ENCODE measurements at regions of chr4 and their contacts with region 1.

Region 1: DNA sequence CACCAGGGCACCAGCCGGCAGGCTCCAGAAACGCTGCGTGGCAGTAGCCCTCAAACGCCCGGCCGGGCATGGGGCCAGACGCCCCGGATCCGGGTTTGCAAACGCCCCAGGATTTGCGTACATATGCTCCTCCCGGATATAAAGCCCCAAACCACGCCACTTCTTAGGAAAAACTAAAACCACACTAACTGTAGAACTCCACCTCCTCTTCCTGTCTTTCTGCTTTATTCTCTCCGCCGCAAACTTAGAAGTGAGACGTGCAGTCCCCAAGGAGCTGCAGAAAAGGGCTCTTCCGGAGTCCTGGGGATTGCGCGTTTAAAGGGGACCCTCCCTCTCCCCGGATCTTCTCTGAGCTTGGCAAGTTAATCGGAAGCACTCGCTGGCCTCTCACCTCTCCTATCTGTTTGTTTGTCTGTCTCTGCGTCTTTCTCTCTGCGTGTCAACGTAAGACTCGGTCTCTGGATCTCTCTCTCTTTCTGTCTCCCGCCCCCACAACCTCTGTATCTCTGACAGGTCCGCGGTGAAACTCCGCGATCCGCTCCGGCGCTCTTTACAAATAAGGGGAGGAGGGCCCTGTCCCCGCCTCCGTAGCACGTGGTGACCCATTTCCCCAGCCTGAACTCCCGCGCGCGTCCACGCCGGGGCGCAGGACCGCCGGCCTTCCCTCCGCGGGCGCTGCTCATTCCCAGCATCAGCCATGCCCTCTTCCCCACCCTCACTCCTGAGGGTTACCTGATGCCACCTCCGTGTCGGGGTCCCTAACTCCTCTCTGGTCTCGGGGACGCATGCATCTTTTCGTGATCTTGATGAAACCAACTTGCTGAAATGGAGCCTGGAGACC is at the start of gene SLC39A8:
- DNase-seq: peak; percentile 93
- ATAC-seq: peak; percentile 88
- H3K4me3 ChIP-seq: peak within 1 kb of the TSS; percentile 75 to 91 (median 84)
- H3K4me3 Mint-ChIP-seq: peak within 1 kb of the TSS; percentile 87
- H3K27ac ChIP-seq: peak within 1 kb of the TSS; percentile 88 to 90
- H3K27ac Mint-ChIP-seq: peak within 1 kb of the TSS; percentile 90
- H3K4me1 ChIP-seq: peaks cover 21 to 23% of the 10 kb centered on the region in 2 donors
- H3K4me1 Mint-ChIP-seq: peaks cover 24% of the 10 kb centered on the region
- H3K27me3 ChIP-seq: no peaks in the 10 kb centered on the region
- H3K27me3 Mint-ChIP-seq: no peaks in the 10 kb centered on the region
- CTCF ChIP-seq: peak; percentile 91
- total RNA-seq, gene SLC39A8: 8.4 and 10.2 TPM in 2 replicates

Region 2: DNA sequence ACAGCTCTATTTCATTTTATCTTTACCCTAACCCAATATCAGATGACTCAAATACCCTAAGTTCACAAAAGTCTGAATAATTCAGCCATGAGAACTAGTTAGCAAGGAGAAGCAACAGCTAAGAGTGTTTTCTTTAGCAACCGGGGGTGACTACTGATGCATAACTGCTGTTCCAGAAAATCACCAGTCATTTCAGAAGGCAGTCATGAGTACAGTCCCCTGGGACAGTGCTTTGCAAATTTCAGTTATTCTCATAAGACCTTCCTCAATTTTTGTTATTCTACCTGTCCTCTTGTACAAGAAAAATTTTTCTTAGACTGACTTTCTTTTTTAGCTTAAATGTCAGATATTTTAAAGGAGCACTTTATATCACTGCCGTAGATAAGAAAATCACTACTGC is 538.3 kb before region 1 on chr4:
- CTCF ChIA-PET with region 1: no interaction called
- POLR2A ChIA-PET with region 1: no interaction called
- intact Hi-C with region 1: loop called (anchors 10 kb)
- DNase-seq: peak; percentile 95
- ATAC-seq: peak; percentile 91
- H3K4me3 ChIP-seq: peak overlapping the region; percentile 13 to 42 (median 38)
- H3K4me3 Mint-ChIP-seq: peak overlapping the region; percentile 81
- H3K27ac ChIP-seq: peak overlapping the region; percentile 94 to 99
- H3K27ac Mint-ChIP-seq: peak overlapping the region; percentile 97
- H3K4me1 ChIP-seq: peaks cover 73 to 87% of the 10 kb centered on the region in 2 donors
- H3K4me1 Mint-ChIP-seq: peaks cover 77% of the 10 kb centered on the region
- H3K27me3 ChIP-seq: no peaks in the 10 kb centered on the region
- H3K27me3 Mint-ChIP-seq: no peaks in the 10 kb centered on the region
- CTCF ChIP-seq: peak; percentile 34

Region 3: GRCh38 chr4:102430461-102430910 is 85.3 kb after region 1 on chr4:
- CTCF ChIA-PET with region 1: interaction called, 7 read pairs
- POLR2A ChIA-PET with region 1: no interaction called
- intact Hi-C with region 1: loop called (anchors 1 kb)
- DNase-seq: no peak
- ATAC-seq: no peak
- H3K4me3 ChIP-seq: peak overlapping the region; percentile 48 to 79 (median 61)
- H3K4me3 Mint-ChIP-seq: peak overlapping the region; percentile 91
- H3K27ac ChIP-seq: peak overlapping the region in 1 of 2 donors; percentile 38
- H3K27ac Mint-ChIP-seq: peak overlapping the region; percentile 59
- H3K4me1 ChIP-seq: peaks cover 0 to 5% of the 10 kb centered on the region in 2 donors
- H3K4me1 Mint-ChIP-seq: peaks cover 5% of the 10 kb centered on the region
- H3K27me3 ChIP-seq: no peaks in the 10 kb centered on the region
- H3K27me3 Mint-ChIP-seq: no peaks in the 10 kb centered on the region
- CTCF ChIP-seq: no peak

Region 4: DNA sequence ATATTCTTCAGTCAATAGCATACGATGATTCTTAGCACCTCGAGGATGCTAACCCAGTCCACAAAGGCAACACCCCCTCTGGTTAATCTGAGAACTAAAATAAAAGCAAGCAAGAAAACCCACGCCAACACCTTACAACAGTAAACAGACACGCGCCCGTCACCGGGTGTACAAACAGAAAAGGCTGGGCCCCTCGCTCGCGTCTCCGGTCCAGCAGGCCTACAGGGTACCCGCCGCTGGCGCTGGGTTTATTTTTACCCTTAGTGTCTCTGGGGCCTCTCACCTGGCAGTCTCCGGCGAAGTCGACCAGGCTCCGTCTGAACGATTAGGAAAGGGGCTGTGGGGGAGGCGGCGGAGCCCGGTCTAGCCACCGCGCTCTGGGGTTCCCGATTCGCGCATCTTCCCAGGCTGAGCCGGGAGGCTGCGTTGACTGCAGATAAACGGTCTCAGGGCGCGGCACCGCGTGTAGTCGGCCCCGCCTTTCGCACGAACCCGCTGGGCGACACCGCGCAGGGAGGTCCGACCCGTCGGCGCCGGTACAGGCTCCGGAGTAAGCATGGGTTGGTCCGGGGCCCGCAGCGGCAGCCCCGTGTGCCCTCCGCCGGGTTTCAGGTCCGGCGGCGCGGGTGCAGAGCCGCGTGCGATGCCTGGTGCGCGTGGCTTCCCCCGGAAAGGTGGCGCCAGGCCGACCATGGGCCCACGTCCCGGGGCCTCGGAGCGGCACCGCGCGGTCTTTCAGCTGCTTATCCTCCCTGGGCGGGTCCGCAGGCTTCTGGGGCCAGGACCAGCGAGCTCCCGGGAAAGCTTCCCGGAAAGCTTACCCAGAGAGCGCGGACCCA is 730.9 kb after region 1 on chr4:
- CTCF ChIA-PET with region 1: no interaction called
- POLR2A ChIA-PET with region 1: no interaction called
- intact Hi-C with region 1: loop called (anchors 1 kb)
- DNase-seq: peak; percentile 78
- ATAC-seq: peak; percentile 55
- H3K4me3 ChIP-seq: peak overlapping the region; percentile 65 to 83 (median 80)
- H3K4me3 Mint-ChIP-seq: peak overlapping the region; percentile 82
- H3K27ac ChIP-seq: peak overlapping the region; percentile 92
- H3K27ac Mint-ChIP-seq: peak overlapping the region; percentile 89
- H3K4me1 ChIP-seq: peaks cover 27 to 31% of the 10 kb centered on the region in 2 donors
- H3K4me1 Mint-ChIP-seq: peaks cover 35% of the 10 kb centered on the region
- H3K27me3 ChIP-seq: no peaks in the 10 kb centered on the region
- H3K27me3 Mint-ChIP-seq: no peaks in the 10 kb centered on the region
- CTCF ChIP-seq: peak; percentile 12

Region 5: DNA sequence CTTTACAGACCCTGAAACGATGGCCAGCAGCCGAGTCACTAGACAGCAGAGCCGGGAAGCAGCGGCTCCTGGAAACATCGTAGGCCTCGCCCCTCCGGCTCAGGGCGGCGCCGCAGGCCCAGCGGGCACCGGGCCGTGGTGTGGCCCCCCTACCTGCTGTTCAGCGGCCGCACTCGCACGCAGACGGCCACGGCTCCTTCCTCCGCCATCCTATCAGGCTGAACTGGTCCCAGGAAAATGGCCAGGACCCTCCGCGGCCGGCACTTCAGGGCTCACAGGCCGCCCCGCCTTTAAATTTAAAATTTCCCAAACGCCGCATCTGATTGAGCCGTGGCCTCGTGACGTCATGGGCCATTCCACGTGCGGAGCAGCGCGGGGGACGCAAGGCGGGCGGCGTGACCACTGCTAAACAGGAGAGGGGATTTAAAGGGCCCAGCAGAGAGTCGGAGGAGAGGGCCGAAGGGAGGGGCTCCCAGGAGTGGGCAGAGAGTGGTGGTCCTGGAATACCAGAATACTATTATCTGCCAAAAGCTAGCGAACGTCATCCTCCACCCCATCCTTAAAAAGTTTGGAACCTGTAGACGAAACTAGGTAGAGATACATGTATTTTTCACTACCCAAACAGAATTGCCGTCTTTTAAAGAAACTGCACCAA is 853.1 kb after region 1 on chr4 and contains the start of gene CENPE:
- CTCF ChIA-PET with region 1: no interaction called
- POLR2A ChIA-PET with region 1: no interaction called
- intact Hi-C with region 1: loop called (anchors 5 kb)
- DNase-seq: peak; percentile 94
- ATAC-seq: peak; percentile 88
- H3K4me3 ChIP-seq: peak within 1 kb of the TSS; percentile 59 to 95 (median 79)
- H3K4me3 Mint-ChIP-seq: peak within 1 kb of the TSS; percentile 94
- H3K27ac ChIP-seq: peak within 1 kb of the TSS; percentile 64 to 87
- H3K27ac Mint-ChIP-seq: peak within 1 kb of the TSS; percentile 96
- H3K4me1 ChIP-seq: peaks cover 9 to 10% of the 10 kb centered on the region in 2 donors
- H3K4me1 Mint-ChIP-seq: peaks cover 15% of the 10 kb centered on the region
- H3K27me3 ChIP-seq: peaks cover 0 to 7% (median 0%) of the 10 kb centered on the region in 4 experiments
- H3K27me3 Mint-ChIP-seq: peaks cover 12% of the 10 kb centered on the region
- CTCF ChIP-seq: no peak
- total RNA-seq, gene CENPE: 2.1 and 2.8 TPM in 2 replicates